Dorsolateral prefrontal cortex (tissue), 120 donors: ENCODE measurements at regions of chr2 and their contacts with region 1.

Region 1: DNA sequence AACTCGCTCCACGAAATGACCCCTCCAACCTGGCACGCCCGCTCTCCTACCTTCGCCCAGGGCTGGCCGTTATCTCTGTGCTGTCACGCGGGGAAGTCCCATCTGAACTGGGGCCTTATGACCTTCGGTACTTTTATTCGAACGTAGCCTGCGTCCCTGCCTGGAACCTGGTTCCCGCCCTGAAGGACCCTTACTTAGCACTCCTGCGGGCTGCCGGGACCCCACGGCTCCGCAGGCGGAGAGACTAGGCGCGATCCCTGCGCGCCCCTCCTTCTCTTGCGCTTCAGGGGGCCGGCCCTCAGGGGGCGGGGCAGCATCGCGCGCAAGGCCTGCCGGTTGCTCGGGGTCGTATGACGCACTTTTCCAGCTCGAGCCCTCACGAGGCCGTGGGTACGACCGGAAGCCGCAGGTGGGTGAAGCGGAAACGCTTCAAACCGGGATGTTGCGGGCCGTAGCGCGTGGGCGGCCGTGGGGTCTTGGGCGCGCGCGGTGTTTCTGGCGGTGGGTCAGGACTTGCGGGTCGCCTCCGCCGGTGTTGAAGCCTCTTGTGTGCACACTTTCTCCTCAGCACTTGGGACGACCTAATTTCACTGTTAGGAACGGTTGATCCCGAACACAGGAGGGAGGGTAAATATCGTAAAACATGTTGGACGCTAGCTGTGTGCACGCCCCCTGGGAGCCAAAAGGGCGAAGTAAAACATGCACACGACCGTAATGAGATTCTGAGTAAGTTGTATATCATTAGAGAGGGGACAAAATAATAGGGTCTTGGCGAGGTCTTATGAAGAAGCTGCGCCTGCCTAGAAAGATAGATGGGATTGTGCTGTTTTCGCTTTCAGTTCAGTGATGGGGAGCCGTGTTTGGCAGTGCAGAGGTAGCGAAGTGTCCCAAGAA is at the starts of genes LIPT1 and TSGA10:
- DNase-seq: peak; percentile 83 to 94 (median 91)
- H3K4me3 ChIP-seq: peak within 1 kb of the TSS; percentile 59 to 95 (median 85)
- H3K27ac ChIP-seq: peak within 1 kb of the TSS; percentile 32 to 97 (median 90)
- H3K27me3 ChIP-seq: no peaks in the 10 kb centered on the region
- CTCF ChIP-seq: peak in 40 of 56 donors; percentile 5 to 65 (median 34)
- total RNA-seq, gene LIPT1: 3.8 to 24.2 (median 11.3) TPM
- total RNA-seq, gene TSGA10: 18.6 to 47.7 (median 28.7) TPM

Region 2: DNA sequence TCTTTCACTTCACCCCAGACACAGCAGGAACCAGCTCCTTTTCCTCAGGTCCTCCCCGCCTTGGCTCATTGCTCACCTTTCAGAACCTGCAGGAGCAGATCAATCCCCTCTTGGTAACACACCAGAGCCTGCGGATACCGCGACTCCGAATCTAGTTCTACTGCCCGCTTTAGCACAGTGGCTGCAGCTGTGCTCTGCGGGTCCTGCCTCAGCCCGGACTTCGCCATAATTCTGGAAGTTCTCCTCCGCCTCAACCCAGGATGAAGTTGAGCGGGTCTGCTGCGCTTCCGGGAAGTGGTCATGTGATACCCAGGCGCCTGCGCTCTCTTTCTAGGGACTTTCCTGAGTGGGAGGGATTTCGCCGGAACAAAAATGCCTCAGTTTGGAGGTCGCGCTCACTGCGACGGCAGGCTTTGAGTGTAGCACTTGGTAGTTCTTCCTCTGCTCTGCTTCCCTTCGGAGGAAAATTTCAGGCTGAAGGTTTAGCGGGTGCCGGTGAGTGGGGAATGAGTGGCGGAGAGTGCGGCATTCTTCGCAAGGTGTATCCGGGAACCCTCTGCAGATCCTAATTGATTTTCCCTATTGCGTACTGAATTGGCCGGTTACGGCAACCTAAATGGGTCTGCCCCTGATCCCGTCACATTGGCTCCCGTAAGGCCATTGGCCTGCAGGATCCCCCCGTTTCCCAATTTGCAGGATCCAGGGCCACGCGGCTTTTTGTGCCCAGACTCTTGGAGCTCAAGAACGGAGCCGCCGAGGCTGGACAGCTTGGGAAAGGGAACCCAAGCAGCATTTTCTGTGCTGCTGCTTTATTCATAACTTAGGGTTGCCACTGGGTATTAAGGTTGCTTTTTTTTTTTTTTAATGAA is 26.1 kb after region 1 on chr2 and contains the starts of genes MITD1 and MRPL30:
- intact Hi-C with region 1: loop called (anchors 1 to 2 kb)
- DNase-seq: peak; percentile 91 to 96 (median 94)
- H3K4me3 ChIP-seq: peak within 1 kb of the TSS; percentile 54 to 99 (median 88)
- H3K27ac ChIP-seq: peak within 1 kb of the TSS in 58 of 59 donors; percentile 17 to 92 (median 81)
- H3K27me3 ChIP-seq: no peaks in the 10 kb centered on the region
- CTCF ChIP-seq: peak in 42 of 56 donors; percentile 3 to 60 (median 39)
- total RNA-seq, gene MITD1: 7.5 to 42.1 (median 22.0) TPM
- total RNA-seq, gene MRPL30: 18.6 to 44.3 (median 31.2) TPM